ENCODE measurements at regions of chr7 and their contacts with region 1.

Region 1: DNA sequence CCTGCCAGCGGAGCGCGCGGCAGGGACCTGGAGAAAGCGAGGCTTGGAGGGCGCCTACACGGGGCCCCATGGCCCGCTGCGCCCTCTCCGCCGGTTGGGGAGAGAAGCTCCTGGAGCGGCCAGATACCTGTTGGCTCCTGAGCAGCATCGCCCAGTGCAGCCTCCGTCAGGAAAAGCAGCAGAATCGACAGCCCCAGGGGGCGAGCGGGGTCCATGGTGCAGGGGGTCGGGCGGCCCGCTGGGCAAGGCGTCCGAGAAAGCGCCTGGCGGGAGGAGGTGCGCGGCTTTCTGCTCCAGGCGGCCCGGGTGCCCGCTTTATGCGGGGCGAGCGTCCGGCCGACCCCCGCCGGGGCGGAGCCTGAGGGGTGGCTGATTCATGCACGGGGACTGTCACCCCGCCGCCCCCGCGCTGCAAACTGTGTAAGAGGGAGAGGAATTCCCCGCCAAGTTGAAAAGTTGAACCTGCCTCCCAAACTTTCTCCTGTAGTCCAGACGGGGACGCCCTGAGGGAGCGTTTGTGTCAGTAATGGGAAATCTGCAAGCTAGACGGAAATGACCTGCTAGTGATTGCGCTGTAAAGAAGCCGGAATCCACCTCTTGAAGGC is at the start of gene TFPI2:
- DNase-seq: peak; percentile 77 to 94
- ATAC-seq: peak; percentile 87 to 92
- H3K4me3 ChIP-seq: peak within 1 kb of the TSS; percentile 63
- H3K27ac ChIP-seq: peak within 1 kb of the TSS; percentile 74 to 97
- H3K4me1 ChIP-seq: peaks cover 45% of the 10 kb centered on the region
- CTCF ChIP-seq: peak; percentile 40; the same call in 2 of the 3 replicates
- EP300 ChIP-seq: peak in 1 of 2 experiments; percentile 45; a peak in 1 of 5 replicates
- POLR2A ChIP-seq: peak; percentile 92
- RAD21 ChIP-seq: peak; percentile 63 to 75
- polyA plus RNA-seq, gene TFPI2: 128 and 172 TPM in 2 replicates

Region 2: DNA sequence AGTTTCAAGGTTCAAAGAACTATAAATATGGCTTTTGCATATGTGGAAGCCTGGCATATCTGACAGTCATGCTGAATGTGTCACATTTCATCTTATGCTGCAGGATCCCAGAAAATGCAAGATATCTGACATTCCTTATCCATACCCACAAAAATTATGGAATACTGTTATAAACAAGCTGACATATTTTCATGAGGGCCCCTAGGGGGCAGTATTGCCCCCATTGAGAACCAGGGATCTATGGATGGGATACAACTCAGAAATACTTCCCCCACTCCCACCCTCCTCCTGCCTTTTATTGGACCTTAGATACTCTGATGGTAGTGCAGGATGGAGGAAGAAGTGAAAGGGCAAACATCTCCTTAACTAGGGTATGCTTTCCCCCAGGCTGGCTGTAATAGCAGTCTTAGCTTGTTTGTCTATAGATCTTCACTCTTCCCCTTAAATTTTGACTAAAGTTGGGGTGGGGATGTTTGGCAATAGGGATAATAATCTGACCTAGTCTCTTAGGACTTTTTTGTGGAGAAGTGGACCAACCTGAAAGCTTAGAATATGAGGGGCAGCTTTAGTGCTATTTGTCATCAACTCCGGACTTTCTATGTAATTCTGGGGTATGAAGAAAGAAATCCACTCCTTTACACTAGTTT is 12.3 kb after region 1 on chr7:
- CTCF ChIA-PET with region 1: interaction called, 10 read pairs
- POLR2A ChIA-PET with region 1: interaction called, 29 read pairs
- DNase-seq: peak in 1 of 2 experiments; percentile 74
- ATAC-seq: peak; percentile 39 to 82; a peak in 3 of 6 replicates
- H3K4me3 ChIP-seq: no peak overlapping the region
- H3K27ac ChIP-seq: peak overlapping the region in 1 of 2 experiments; percentile 62; a peak in 3 of 6 replicates
- H3K4me1 ChIP-seq: peaks cover 25% of the 10 kb centered on the region
- CTCF ChIP-seq: peak; percentile 75
- EP300 ChIP-seq: no peak
- POLR2A ChIP-seq: no peak
- RAD21 ChIP-seq: peak; percentile 74 to 79

Region 3: DNA sequence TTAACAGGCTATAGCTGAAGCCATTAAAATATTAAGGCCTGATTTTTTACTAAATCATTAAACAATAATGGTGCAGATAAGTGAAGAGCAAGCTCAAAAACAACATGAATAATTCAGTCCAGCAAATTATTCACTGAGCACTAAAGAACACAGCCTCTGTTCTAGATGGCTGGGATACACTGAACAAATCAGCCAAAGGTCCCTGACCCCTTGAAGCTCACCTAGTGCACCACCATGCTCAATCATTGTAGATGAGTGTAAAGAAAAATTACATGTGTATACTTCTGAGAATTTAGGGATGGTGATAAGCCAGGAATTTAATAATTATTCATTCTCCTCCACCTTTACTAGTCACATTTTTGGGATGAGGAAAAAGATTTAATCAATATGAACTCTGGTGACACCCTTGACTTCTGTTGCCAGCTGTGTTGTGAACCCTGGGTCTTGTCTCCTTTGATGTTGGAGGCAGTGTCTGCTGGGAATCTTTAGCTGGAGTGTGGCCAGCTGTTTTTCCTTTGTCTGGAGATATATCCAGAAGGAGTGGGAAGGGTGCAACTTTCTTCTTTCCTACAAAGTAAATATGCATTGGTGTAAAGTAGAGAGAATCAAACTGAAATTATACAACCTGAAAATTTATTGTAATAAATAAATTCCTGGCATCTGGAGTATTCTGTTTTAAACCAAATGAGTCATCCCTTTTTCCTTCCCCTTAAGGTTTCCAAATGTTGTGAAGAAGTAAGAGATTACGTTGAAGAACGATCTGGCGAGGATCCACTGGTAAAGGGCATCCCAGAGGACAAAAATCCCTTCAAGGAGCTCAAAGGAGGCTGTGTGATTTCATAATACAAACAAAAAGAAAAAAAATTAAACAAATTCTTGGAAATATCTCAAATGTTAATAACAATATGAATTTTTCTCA is 19.8 kb after region 1 on chr7:
- CTCF ChIA-PET with region 1: interaction called, 7 read pairs
- POLR2A ChIA-PET with region 1: interaction called, 29 read pairs
- DNase-seq: peak in 1 of 2 experiments; percentile 79
- ATAC-seq: peak; percentile 61 to 63
- H3K4me3 ChIP-seq: no peak overlapping the region
- H3K27ac ChIP-seq: peak overlapping the region; percentile 67 to 88
- H3K4me1 ChIP-seq: peaks cover 76% of the 10 kb centered on the region
- CTCF ChIP-seq: no peak
- EP300 ChIP-seq: peak; percentile 83 to 89; a peak in 4 of 5 replicates
- POLR2A ChIP-seq: no peak
- RAD21 ChIP-seq: peak in 1 of 2 experiments; percentile 36; a peak in 1 of 5 replicates

Region 4: GRCh38 chr7:93921607-93922566 is 31.3 kb after region 1 on chr7 and contains the start of gene GNG11:
- CTCF ChIA-PET with region 1: interaction called, 4 read pairs
- POLR2A ChIA-PET with region 1: interaction called, 39 read pairs
- DNase-seq: peak; percentile 38 to 79
- ATAC-seq: peak; percentile 89 to 94
- H3K4me3 ChIP-seq: peak within 1 kb of the TSS; percentile 74
- H3K27ac ChIP-seq: peak within 1 kb of the TSS; percentile 75 to 99
- H3K4me1 ChIP-seq: peaks cover 11% of the 10 kb centered on the region; the same call in 2 of the 3 replicates
- CTCF ChIP-seq: no peak
- EP300 ChIP-seq: 0 out of 5 replicates have a peak, but pooled peaks of 1 of the 2 experiments have one; percentile 21
- POLR2A ChIP-seq: peak; percentile 47
- RAD21 ChIP-seq: 0 out of 5 replicates have a peak, but pooled peaks of 1 of the 2 experiments have one; percentile 19
- polyA plus RNA-seq, gene GNG11: 23.4 and 31.1 TPM in 2 replicates